ENCODE measurements at regions of chr22 and their contacts with region 1.

Region 1: DNA sequence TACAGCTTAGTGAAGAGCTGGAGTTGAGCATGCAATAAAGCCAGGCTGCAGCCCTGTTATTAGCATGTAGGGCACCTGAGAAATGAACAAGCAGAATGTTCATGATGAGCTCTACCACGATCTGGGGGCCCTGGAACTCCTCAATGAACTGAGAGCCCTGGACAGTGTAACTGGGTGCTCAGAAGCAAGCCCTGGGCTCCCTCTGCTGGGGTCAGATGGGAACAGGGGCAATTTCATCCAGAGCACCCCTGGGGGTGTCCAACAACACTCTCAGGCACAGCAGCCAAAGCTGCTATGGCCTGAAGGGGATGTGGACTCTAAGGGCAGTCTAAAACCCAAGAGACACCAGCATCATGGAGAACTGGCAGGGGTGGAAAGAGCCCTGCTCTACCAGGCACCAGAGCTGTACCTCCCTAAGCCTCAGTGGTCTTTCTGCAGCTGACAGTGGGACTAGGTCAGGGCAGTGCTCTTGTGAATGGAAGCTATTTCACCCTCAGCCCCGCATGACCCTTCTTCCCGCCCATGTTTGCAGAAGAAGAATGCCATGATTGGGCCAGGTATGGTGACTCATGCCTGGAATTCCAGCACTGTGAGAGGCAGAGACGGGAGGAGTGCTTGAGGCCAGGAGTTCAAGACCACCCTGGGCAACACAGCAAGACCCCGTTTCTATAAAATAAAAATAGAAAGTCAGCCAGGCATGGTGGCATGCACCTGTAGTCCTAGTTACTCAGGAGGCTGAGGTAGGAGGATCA is 28.9 kb downstream of the THOC5 start:
- DNase-seq: peak in 2 of 3 donors; percentile 37 to 39
- ATAC-seq: peak; percentile 67
- H3K4me3 ChIP-seq: no peak overlapping the region
- H3K4me1 ChIP-seq: no peaks in the 10 kb centered on the region
- CTCF ChIP-seq: no peak

Region 2: DNA sequence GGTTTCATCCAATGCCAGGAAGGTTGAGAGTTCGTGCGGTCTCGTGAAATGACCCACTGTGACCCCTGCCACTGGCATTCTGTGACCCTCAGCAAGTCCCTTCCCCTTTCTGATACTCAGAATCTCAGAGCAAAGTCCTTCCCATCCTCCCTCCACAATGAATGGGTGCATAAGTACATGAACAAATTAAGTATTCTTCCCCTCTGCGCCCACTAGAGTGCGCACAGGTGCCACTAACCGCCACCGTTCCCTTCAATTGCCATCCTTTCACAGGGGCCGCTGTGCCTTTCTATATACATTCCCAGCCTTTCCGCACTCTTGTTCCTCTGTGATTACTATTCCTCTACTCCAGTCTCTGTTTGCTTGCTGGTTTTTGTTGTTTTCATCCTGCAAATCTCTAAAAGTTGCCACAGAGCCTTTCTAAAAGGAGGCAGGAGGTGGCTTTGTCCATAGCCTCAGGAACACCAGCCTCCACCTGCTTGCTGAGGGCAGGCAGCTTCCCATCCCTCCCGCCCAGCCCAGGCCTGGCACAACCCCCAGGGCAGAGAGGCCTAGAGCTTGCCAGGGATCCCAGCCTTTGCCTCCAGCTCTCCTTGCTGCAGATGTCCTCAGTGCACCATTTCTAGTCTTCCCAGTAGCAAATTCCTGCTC is 129.6 kb before region 1 on chr22:
- intact Hi-C with region 1: loop called in 1 of 2 experiments (anchors 10 kb)
- DNase-seq: peak in 2 of 3 donors; percentile 78 to 84
- ATAC-seq: peak; percentile 93
- H3K4me3 ChIP-seq: no peak overlapping the region
- H3K4me1 ChIP-seq: no peaks in the 10 kb centered on the region
- CTCF ChIP-seq: peak; percentile 66

Measured in mucosa of descending colon (tissue), 3 donors.